Left cardiac atrium (tissue), 4 donors: ENCODE measurements at regions of chr12 and their contacts with region 1.

Region 1: GRCh38 chr12:64625243-64626077 is 15.2 kb downstream of the RASSF3 start:
- DNase-seq: peak; percentile 75
- ATAC-seq: peak; percentile 89 to 90

Region 2: GRCh38 chr12:64583771-64584421 is 41.6 kb before region 1 on chr12:
- intact Hi-C with region 1: no loop called
- DNase-seq: no peak
- ATAC-seq: peak in 1 of 2 donors; percentile 41

Region 3: DNA sequence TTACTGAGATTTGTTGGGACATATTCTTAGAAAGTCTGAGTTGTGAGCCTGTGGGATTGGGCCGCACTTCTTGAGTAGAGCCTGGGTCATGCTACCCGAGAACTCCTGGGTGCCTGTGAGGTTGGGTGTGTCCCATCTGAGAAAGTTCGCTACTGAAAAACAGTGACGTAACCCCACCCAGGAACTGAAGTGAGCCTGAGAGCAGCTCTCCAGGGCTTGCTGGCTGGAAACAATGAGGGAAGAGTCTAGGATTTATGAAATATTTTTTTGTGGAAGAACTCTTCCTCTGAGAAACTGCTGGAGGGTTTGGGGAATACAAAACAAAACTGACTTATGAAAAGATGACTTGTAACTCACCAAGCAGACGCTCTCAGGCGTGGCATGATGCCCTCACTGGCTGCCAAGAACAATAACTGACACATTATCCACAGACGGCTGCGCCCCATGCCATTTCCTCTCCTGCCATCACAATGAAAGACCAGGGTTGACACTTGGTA is 54.1 kb after region 1 on chr12:
- intact Hi-C with region 1: loop called in 1 of 2 experiments (anchors 5 kb)
- DNase-seq: peak; percentile 84
- ATAC-seq: peak; percentile 59 to 64

Region 4: GRCh38 chr12:64968989-64969735 is 343.7 kb after region 1 on chr12:
- intact Hi-C with region 1: no loop called
- DNase-seq: no peak
- ATAC-seq: no peak

Region 5: DNA sequence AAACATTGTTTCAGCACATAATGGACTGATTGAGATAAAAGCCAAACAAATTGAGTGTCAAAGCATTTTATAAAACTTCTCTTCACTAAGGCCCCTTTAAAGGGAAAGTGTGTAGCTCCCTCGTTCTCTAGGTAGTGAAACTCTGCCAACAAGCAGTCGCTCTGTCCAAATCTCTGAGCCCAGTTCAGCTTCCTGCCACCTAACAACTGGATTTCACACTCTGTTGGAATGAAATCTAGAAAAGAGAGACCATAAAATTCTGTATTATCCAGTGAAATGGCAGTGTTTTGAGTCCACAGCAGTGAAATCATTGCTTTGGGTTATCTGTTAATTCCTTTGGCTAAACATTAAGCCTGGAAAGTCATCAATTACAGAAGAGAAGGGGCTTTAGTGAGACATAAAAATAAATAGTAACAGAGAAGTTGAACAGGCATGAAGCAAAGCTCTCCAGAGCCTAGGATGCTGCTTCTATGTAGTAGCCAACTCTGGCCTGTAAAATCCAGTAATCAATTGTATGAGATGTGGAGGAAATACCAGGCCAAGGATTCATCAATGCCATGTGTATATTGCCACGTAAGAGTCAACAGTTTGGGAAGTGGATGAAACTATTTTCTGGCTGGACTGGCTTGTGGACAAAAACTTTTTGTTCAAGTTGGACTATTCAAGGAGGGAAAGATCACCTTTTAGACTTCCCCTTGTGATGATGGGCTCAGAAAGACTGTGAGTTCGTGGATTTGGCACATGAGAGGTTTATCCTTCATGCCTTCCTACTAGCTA is 373.1 kb after region 1 on chr12:
- intact Hi-C with region 1: no loop called
- DNase-seq: no peak
- ATAC-seq: peak in 1 of 2 donors; percentile 36